Caco-2 (cell line): ENCODE measurements at regions of chr2 and their contacts with region 1.

Region 1: GRCh38 chr2:150487537-150488429 is at the start of gene RND3:
- DNase-seq: peak; percentile 97 to 98
- H3K4me3 ChIP-seq: peak within 1 kb of the TSS; percentile 81
- H3K4me3 Mint-ChIP-seq: peak within 1 kb of the TSS; percentile 99
- H3K27ac Mint-ChIP-seq: peak within 1 kb of the TSS; percentile 93
- H3K4me1 ChIP-seq: peaks cover 22% of the 10 kb centered on the region
- H3K4me1 Mint-ChIP-seq: peaks cover 12% of the 10 kb centered on the region
- H3K27me3 ChIP-seq: no peaks in the 10 kb centered on the region
- H3K27me3 Mint-ChIP-seq: no peaks in the 10 kb centered on the region
- CTCF ChIP-seq: peak; percentile 83 to 85
- total RNA-seq, gene RND3: 70.9 and 75.0 TPM in 2 replicates

Region 2: GRCh38 chr2:149597668-149598326 is 890.0 kb before region 1 on chr2:
- CTCF ChIA-PET with region 1: no interaction called
- POLR2A ChIA-PET with region 1: no interaction called
- intact Hi-C with region 1: loop called (anchors 1 kb)
- DNase-seq: peak; percentile 55 to 68
- H3K4me3 ChIP-seq: no peak overlapping the region
- H3K4me3 Mint-ChIP-seq: no peak overlapping the region
- H3K27ac Mint-ChIP-seq: no peak overlapping the region
- H3K4me1 ChIP-seq: peaks cover 24% of the 10 kb centered on the region
- H3K4me1 Mint-ChIP-seq: peaks cover 26% of the 10 kb centered on the region
- H3K27me3 ChIP-seq: no peaks in the 10 kb centered on the region
- H3K27me3 Mint-ChIP-seq: no peaks in the 10 kb centered on the region
- CTCF ChIP-seq: peak; percentile 77 to 83

Region 3: DNA sequence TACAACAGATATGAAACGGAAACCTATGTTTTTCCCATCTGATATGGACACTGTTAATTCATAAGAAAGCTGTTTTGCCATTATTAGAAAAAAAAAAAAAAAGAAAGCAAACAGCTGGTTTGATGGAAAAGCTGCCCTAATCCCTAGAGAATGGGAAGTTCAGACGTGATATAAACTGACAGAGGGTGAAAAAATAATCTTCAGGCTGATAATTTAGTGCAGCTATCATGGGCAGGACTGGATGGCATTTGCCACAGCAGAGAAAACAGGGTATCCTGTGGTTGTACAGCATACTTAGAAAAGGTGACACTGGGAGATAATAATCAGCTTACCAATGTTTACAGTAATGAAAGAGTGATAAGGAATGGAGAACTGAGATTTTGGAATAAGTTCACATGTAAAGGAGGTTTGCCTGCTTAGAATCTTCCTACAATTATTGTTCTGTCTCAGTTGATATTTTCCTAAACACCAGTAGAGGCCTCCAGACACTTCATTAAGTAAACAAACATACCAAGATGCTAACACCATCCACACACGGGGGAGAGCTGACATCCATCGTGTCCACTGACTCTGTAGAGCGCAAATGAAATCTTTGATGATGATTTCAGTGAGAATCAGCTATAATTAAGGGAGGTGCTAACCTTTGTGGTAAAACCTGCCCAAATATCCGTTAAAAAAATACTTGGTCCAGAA is 688.6 kb before region 1 on chr2:
- CTCF ChIA-PET with region 1: no interaction called
- POLR2A ChIA-PET with region 1: no interaction called
- intact Hi-C with region 1: loop called (anchors 1 kb)
- DNase-seq: no peak
- H3K4me3 ChIP-seq: no peak overlapping the region
- H3K4me3 Mint-ChIP-seq: no peak overlapping the region
- H3K27ac Mint-ChIP-seq: no peak overlapping the region
- H3K4me1 ChIP-seq: 0 out of 2 replicates have a peak, but pooled peaks cover 3% of the 10 kb centered on the region
- H3K4me1 Mint-ChIP-seq: peaks cover 10% of the 10 kb centered on the region
- H3K27me3 ChIP-seq: no peaks in the 10 kb centered on the region
- H3K27me3 Mint-ChIP-seq: no peaks in the 10 kb centered on the region
- CTCF ChIP-seq: no peak

Region 4: DNA sequence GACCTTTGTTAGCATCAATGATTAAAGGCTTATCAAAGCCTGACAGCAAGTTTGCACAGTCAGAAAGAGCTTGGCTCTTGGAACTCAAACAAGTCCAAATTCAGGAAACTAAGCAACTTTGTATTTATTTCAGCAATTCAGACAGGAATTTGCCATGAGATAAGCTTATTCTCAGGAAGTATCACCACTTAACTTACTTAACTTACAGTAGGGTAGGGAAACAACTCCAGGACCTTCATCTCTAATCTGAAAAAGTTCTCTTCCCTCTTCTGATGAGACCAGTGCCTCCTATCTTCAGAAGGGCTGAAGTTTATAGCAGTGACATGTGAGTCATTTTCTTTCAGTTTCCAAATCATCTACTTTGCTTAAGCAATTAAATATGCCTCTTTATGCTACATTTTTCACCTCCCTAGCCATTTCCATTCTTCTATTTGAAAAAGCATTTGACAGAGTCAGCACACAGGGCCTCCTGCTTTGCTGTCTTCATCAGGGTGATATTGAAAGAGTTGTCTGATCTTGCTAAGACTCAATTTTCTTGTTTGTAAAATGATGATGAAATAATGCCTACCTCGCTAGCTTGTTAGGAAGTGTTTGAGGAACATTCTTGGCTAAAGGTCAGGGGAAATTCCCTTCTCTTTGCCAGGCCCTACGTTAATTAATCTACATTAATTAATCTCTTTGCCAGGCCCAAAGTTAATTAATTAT is 389.7 kb before region 1 on chr2:
- CTCF ChIA-PET with region 1: no interaction called
- POLR2A ChIA-PET with region 1: no interaction called
- intact Hi-C with region 1: loop called (anchors 2 kb)
- DNase-seq: peak in 1 of 2 experiments; percentile 17
- H3K4me3 ChIP-seq: no peak overlapping the region
- H3K4me3 Mint-ChIP-seq: no peak overlapping the region
- H3K27ac Mint-ChIP-seq: peak overlapping the region; percentile 59
- H3K4me1 ChIP-seq: peaks cover 21% of the 10 kb centered on the region
- H3K4me1 Mint-ChIP-seq: peaks cover 23% of the 10 kb centered on the region
- H3K27me3 ChIP-seq: no peaks in the 10 kb centered on the region
- H3K27me3 Mint-ChIP-seq: no peaks in the 10 kb centered on the region
- CTCF ChIP-seq: peak in 1 of 2 experiments; percentile 19

Region 5: GRCh38 chr2:150222379-150222778 is 265.4 kb before region 1 on chr2:
- CTCF ChIA-PET with region 1: no interaction called
- POLR2A ChIA-PET with region 1: no interaction called
- intact Hi-C with region 1: loop called (anchors 5 kb)
- DNase-seq: no peak
- H3K4me3 ChIP-seq: no peak overlapping the region
- H3K4me3 Mint-ChIP-seq: no peak overlapping the region
- H3K27ac Mint-ChIP-seq: peak overlapping the region; percentile 40
- H3K4me1 ChIP-seq: peaks cover 39% of the 10 kb centered on the region
- H3K4me1 Mint-ChIP-seq: peaks cover 25% of the 10 kb centered on the region
- H3K27me3 ChIP-seq: no peaks in the 10 kb centered on the region
- H3K27me3 Mint-ChIP-seq: no peaks in the 10 kb centered on the region
- CTCF ChIP-seq: no peak

Region 6: GRCh38 chr2:150526827-150527226 is 39.0 kb after region 1 on chr2:
- CTCF ChIA-PET with region 1: no interaction called
- POLR2A ChIA-PET with region 1: no interaction called
- intact Hi-C with region 1: loop called (anchors 1 kb)
- DNase-seq: peak; percentile 77 to 79
- H3K4me3 ChIP-seq: no peak overlapping the region
- H3K4me3 Mint-ChIP-seq: peak overlapping the region; percentile 28
- H3K27ac Mint-ChIP-seq: peak overlapping the region; percentile 86
- H3K4me1 ChIP-seq: peaks cover 49% of the 10 kb centered on the region
- H3K4me1 Mint-ChIP-seq: peaks cover 28% of the 10 kb centered on the region
- H3K27me3 ChIP-seq: no peaks in the 10 kb centered on the region
- H3K27me3 Mint-ChIP-seq: no peaks in the 10 kb centered on the region
- CTCF ChIP-seq: no peak

Region 7: GRCh38 chr2:150555611-150556356 is 68.0 kb after region 1 on chr2:
- CTCF ChIA-PET with region 1: no interaction called
- POLR2A ChIA-PET with region 1: no interaction called
- intact Hi-C with region 1: no loop called
- DNase-seq: no peak
- H3K4me3 ChIP-seq: no peak overlapping the region
- H3K4me3 Mint-ChIP-seq: no peak overlapping the region
- H3K27ac Mint-ChIP-seq: peak overlapping the region; percentile 9
- H3K4me1 ChIP-seq: peaks cover 5% of the 10 kb centered on the region; the same call in 1 of the 2 replicates
- H3K4me1 Mint-ChIP-seq: peaks cover 5% of the 10 kb centered on the region
- H3K27me3 ChIP-seq: no peaks in the 10 kb centered on the region
- H3K27me3 Mint-ChIP-seq: no peaks in the 10 kb centered on the region
- CTCF ChIP-seq: no peak